ENCODE measurements at regions of chr7 and their contacts with region 1.

Region 1: GRCh38 chr7:142482891-142483658 is 225.2 kb upstream of the PRSS58 start:
- DNase-seq: peak; percentile 50 to 63
- H3K4me3 ChIP-seq: no peak overlapping the region
- H3K4me3 Mint-ChIP-seq: no peak overlapping the region
- H3K27ac Mint-ChIP-seq: no peak overlapping the region
- H3K4me1 ChIP-seq: no peaks in the 10 kb centered on the region
- H3K4me1 Mint-ChIP-seq: no peaks in the 10 kb centered on the region
- H3K27me3 ChIP-seq: no peaks in the 10 kb centered on the region
- H3K27me3 Mint-ChIP-seq: peaks cover 4% of the 10 kb centered on the region
- CTCF ChIP-seq: peak; percentile 74 to 95

Region 2: DNA sequence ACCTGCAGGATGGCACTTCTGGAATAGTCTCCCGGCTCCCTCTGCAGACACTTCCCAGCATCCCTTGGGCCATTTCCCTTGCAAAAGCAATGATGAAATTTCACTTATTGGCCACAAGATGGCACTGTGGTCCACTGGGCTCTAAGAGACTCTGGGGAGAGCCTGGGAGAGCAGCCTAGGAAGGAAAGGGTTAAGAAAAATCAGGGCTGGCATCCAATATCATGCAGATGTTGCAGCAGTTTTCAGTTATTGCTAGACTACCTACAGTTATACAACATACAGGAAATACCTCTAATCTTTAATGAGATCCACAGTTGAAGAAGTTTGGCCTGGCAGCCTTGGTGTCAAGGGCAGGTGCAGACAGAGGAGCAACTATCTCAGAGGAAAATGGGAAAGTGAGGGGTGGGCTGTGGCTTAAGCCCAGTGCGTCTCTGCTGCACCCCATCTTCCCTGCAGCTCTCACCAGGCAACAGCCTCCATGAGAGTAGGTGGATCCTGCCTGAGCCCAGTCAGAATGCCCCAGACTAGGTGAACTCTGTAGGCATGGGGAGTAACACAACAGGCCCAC is 125.0 kb before region 1 on chr7:
- CTCF ChIA-PET with region 1: interaction called, 10 read pairs
- POLR2A ChIA-PET with region 1: no interaction called
- intact Hi-C with region 1: loop called (anchors 2 kb)
- DNase-seq: peak in 1 of 2 experiments; percentile 56
- H3K4me3 ChIP-seq: no peak overlapping the region
- H3K4me3 Mint-ChIP-seq: peak overlapping the region; percentile 20
- H3K27ac Mint-ChIP-seq: no peak overlapping the region
- H3K4me1 ChIP-seq: 0 out of 2 replicates have a peak, but pooled peaks cover 3% of the 10 kb centered on the region
- H3K4me1 Mint-ChIP-seq: peaks cover 5% of the 10 kb centered on the region
- H3K27me3 ChIP-seq: no peaks in the 10 kb centered on the region
- H3K27me3 Mint-ChIP-seq: peaks cover 4% of the 10 kb centered on the region
- CTCF ChIP-seq: peak; percentile 75 to 80

Region 3: GRCh38 chr7:142391191-142391992 is 91.7 kb before region 1 on chr7:
- CTCF ChIA-PET with region 1: no interaction called
- POLR2A ChIA-PET with region 1: no interaction called
- intact Hi-C with region 1: loop called (anchors 1 kb)
- DNase-seq: no peak
- H3K4me3 ChIP-seq: no peak overlapping the region
- H3K4me3 Mint-ChIP-seq: no peak overlapping the region
- H3K27ac Mint-ChIP-seq: no peak overlapping the region
- H3K4me1 ChIP-seq: peaks cover 5% of the 10 kb centered on the region; the same call in 1 of the 2 replicates
- H3K4me1 Mint-ChIP-seq: no peaks in the 10 kb centered on the region
- H3K27me3 ChIP-seq: no peaks in the 10 kb centered on the region
- H3K27me3 Mint-ChIP-seq: peaks cover 4% of the 10 kb centered on the region
- CTCF ChIP-seq: peak; percentile 12 to 23

Region 4: GRCh38 chr7:142420559-142421362 is 62.3 kb before region 1 on chr7:
- CTCF ChIA-PET with region 1: no interaction called
- POLR2A ChIA-PET with region 1: no interaction called
- intact Hi-C with region 1: no loop called
- DNase-seq: peak; percentile 35 to 49
- H3K4me3 ChIP-seq: no peak overlapping the region
- H3K4me3 Mint-ChIP-seq: no peak overlapping the region
- H3K27ac Mint-ChIP-seq: no peak overlapping the region
- H3K4me1 ChIP-seq: no peaks in the 10 kb centered on the region
- H3K4me1 Mint-ChIP-seq: peaks cover 4% of the 10 kb centered on the region
- H3K27me3 ChIP-seq: no peaks in the 10 kb centered on the region; the same call in 1 of the 2 replicates
- H3K27me3 Mint-ChIP-seq: peaks cover 20% of the 10 kb centered on the region
- CTCF ChIP-seq: peak; percentile 24 to 46

Region 5: GRCh38 chr7:142459551-142459963 is 23.5 kb before region 1 on chr7:
- CTCF ChIA-PET with region 1: interaction called, 9 read pairs
- POLR2A ChIA-PET with region 1: no interaction called
- intact Hi-C with region 1: loop called (anchors 1 kb)
- DNase-seq: peak; percentile 50 to 67
- H3K4me3 ChIP-seq: no peak overlapping the region
- H3K4me3 Mint-ChIP-seq: no peak overlapping the region
- H3K27ac Mint-ChIP-seq: no peak overlapping the region
- H3K4me1 ChIP-seq: peaks cover 11% of the 10 kb centered on the region
- H3K4me1 Mint-ChIP-seq: no peaks in the 10 kb centered on the region
- H3K27me3 ChIP-seq: no peaks in the 10 kb centered on the region
- H3K27me3 Mint-ChIP-seq: peaks cover 22% of the 10 kb centered on the region
- CTCF ChIP-seq: peak; percentile 68 to 82

Region 6: GRCh38 chr7:142519083-142520078 is 36.3 kb after region 1 on chr7:
- CTCF ChIA-PET with region 1: no interaction called
- POLR2A ChIA-PET with region 1: no interaction called
- intact Hi-C with region 1: loop called (anchors 5 kb)
- DNase-seq: no peak
- H3K4me3 ChIP-seq: no peak overlapping the region
- H3K4me3 Mint-ChIP-seq: no peak overlapping the region
- H3K27ac Mint-ChIP-seq: no peak overlapping the region
- H3K4me1 ChIP-seq: 0 out of 2 replicates have a peak, but pooled peaks cover 4% of the 10 kb centered on the region
- H3K4me1 Mint-ChIP-seq: no peaks in the 10 kb centered on the region
- H3K27me3 ChIP-seq: no peaks in the 10 kb centered on the region
- H3K27me3 Mint-ChIP-seq: peaks cover 13% of the 10 kb centered on the region
- CTCF ChIP-seq: no peak

Region 7: GRCh38 chr7:142717453-142717852 is 234.4 kb after region 1 on chr7:
- CTCF ChIA-PET with region 1: no interaction called
- POLR2A ChIA-PET with region 1: no interaction called
- intact Hi-C with region 1: no loop called
- DNase-seq: no peak
- H3K4me3 ChIP-seq: no peak overlapping the region
- H3K4me3 Mint-ChIP-seq: no peak overlapping the region
- H3K27ac Mint-ChIP-seq: no peak overlapping the region
- H3K4me1 ChIP-seq: no peaks in the 10 kb centered on the region
- H3K4me1 Mint-ChIP-seq: no peaks in the 10 kb centered on the region
- H3K27me3 ChIP-seq: no peaks in the 10 kb centered on the region
- H3K27me3 Mint-ChIP-seq: peaks cover 12% of the 10 kb centered on the region
- CTCF ChIP-seq: no peak